ENCODE measurements at regions of chr7 and their contacts with region 1.

Region 1: DNA sequence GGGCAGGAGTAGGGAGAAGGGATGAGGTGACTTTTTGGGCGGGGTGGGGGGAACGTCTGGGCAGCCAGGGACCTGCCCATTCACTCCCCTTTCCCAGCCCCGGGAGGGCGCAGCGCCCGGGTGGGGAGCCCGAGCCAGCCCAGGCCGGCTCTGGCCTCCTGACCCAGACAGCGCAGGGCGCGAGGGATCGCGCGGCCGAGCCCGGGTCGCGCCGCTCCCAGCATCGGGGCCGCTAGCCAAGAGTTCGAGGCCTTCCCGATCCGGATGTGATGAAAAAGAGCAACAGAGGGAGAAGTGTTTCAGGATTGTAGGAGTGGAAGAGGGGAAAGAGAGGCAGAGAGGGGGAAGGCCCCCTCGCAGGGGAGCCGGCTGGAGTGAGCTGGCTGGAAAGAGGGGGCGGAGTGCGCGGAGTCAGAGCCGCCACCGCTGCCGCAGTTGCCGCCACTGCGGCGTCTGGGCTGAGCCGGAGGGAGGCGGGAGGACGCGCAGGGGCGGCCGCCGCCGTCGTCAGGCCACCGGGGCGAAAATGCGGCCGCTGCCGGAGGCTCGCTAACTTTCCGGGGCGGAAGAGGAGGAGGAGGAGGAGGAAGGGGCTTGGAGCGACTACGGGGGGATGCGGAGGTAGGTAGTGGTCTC is at the start of gene MDFIC:
- DNase-seq: peak; percentile 68 to 84 (median 73)
- ATAC-seq: peak; percentile 56 to 95 (median 92)
- H3K4me3 ChIP-seq: peak within 1 kb of the TSS; percentile 64 to 92 (median 84)
- H3K27ac ChIP-seq: peak within 1 kb of the TSS; percentile 83 to 96 (median 92)
- H3K4me1 ChIP-seq: peaks cover 0 to 42% (median 17%) of the 10 kb centered on the region in 12 donors
- H3K27me3 ChIP-seq: no peaks in the 10 kb centered on the region
- CTCF ChIP-seq: peak in 4 of 12 donors; percentile 6 to 41 (median 21)
- POLR2A ChIP-seq: peak in 1 of 2 donors; percentile 44
- total RNA-seq, gene MDFIC: 20.6 to 51.8 (median 34.5) TPM

Region 2: GRCh38 chr7:114959931-114960330 is 37.8 kb after region 1 on chr7:
- intact Hi-C with region 1: no loop called
- DNase-seq: no peak
- ATAC-seq: no peak
- H3K4me3 ChIP-seq: no peak overlapping the region
- H3K27ac ChIP-seq: no peak overlapping the region
- H3K4me1 ChIP-seq: peaks cover 0 to 47% (median 5%) of the 10 kb centered on the region in 12 donors
- H3K27me3 ChIP-seq: no peaks in the 10 kb centered on the region
- CTCF ChIP-seq: no peak
- POLR2A ChIP-seq: no peak

Region 3: GRCh38 chr7:114988755-114989375 is 66.7 kb after region 1 on chr7:
- intact Hi-C with region 1: loop called in 4 of 10 experiments (anchors 5 to 10 kb)
- DNase-seq: peak; percentile 56 to 81 (median 62)
- ATAC-seq: peak in 3 of 4 donors; percentile 79 to 92 (median 91)
- H3K4me3 ChIP-seq: no peak overlapping the region
- H3K27ac ChIP-seq: peak overlapping the region; percentile 6 to 78 (median 66)
- H3K4me1 ChIP-seq: peaks cover 0 to 59% (median 36%) of the 10 kb centered on the region in 12 donors
- H3K27me3 ChIP-seq: no peaks in the 10 kb centered on the region
- CTCF ChIP-seq: no peak
- POLR2A ChIP-seq: no peak

Region 4: GRCh38 chr7:115087437-115087836 is 165.3 kb after region 1 on chr7:
- intact Hi-C with region 1: loop called in 1 of 10 experiments (anchors 5 kb)
- DNase-seq: peak in 3 of 5 donors; percentile 26 to 33 (median 32)
- ATAC-seq: peak; percentile 79 to 87 (median 84)
- H3K4me3 ChIP-seq: no peak overlapping the region
- H3K27ac ChIP-seq: peak overlapping the region in 8 of 12 donors; percentile 8 to 61 (median 36)
- H3K4me1 ChIP-seq: peaks cover 0 to 32% (median 23%) of the 10 kb centered on the region in 12 donors
- H3K27me3 ChIP-seq: no peaks in the 10 kb centered on the region
- CTCF ChIP-seq: no peak
- POLR2A ChIP-seq: no peak

Region 5: DNA sequence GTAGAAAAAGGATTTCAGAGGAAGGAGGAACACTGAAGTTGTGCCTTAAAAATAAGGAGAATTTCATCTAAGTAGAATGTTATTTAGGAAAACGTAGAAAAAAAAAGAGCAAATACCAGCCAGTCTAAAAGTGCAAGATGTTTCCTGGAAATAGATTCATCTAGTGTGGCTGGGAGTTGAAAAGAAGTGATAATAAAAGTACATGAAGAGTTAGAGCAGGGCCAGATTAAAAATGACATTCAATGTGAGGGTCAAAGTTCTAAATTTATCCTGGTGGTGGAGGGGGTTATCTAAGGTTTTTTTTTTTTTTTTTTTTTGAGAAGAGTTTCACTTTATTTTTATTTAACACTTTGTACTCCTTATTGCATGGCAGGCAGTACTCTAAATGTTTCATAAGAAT is 289.0 kb after region 1 on chr7:
- intact Hi-C with region 1: loop called in 3 of 10 experiments (anchors 5 kb)
- DNase-seq: no peak
- ATAC-seq: peak; percentile 50 to 68 (median 67)
- H3K4me3 ChIP-seq: no peak overlapping the region
- H3K27ac ChIP-seq: peak overlapping the region in 6 of 12 donors; percentile 47 to 77 (median 64)
- H3K4me1 ChIP-seq: peaks cover 0 to 9% (median 0%) of the 10 kb centered on the region in 12 donors
- H3K27me3 ChIP-seq: no peaks in the 10 kb centered on the region
- CTCF ChIP-seq: no peak
- POLR2A ChIP-seq: no peak

Measured in heart left ventricle (tissue), 16 donors.